Prostate gland (tissue), 2 donors: ENCODE measurements at regions of chr1 and their contacts with region 1.

Region 1: DNA sequence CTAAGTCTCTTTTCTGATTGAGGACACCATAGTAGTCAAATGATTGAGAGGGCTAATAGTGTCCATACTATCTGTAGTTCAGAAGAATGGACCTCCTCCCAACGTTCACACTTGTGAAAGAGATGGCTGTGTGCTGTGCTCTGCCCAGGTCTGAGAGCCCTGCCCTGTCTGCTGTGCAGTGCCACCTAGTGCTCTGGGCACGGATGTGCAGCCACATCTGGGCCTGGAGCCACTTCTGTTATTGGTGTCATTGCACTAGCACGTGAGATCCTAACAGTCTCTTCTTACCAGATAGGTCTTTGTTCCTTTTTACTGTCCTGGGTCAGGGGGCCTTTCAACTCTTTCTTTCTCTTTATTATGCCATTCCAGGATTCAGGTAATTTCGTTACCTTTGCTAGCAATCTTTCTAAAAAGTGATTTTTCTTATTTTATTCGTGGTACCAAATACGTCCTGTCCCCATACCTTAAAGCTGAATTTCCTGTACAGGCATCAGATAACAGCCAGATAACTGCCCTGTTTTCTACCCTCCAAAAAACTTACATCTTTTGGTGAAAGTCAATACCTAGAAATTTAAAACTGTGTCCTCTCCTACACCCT is 21.7 kb downstream of the INTS3 start:
- DNase-seq: peak; percentile 83
- H3K4me3 ChIP-seq: no peak overlapping the region
- H3K27ac ChIP-seq: peak overlapping the region; percentile 5 to 36
- H3K4me1 ChIP-seq: peaks cover 13% of the 10 kb centered on the region
- H3K27me3 ChIP-seq: no peaks in the 10 kb centered on the region
- CTCF ChIP-seq: peak; percentile 50 to 93 (median 84)
- POLR2A ChIP-seq: no peak

Region 2: DNA sequence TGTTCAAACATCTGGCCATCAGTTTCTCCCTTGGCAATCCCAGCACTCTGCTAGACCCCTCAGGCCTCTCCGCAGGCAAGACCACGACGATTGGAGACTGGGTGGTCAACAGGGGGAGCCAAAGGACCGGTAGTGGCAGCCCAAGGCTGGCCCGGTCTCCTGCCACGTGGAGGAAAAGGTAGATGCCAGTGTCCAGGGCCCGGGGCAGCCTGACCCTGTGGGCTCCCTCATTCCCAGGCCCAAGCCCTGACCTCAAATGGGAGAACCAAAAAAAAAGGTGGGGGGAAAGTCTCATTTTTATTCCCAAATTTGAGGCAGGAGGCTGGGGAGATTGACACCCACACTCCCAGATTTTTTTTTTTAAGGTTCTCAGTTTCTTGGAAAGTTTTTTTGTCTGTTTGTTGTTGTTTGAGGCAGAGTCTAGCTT is 238.5 kb before region 1 on chr1:
- intact Hi-C with region 1: loop called (anchors 10 kb)
- DNase-seq: peak; percentile 72
- H3K4me3 ChIP-seq: no peak overlapping the region
- H3K27ac ChIP-seq: no peak overlapping the region
- H3K4me1 ChIP-seq: no peaks in the 10 kb centered on the region
- H3K27me3 ChIP-seq: no peaks in the 10 kb centered on the region
- CTCF ChIP-seq: peak; percentile 62 to 94 (median 80)
- POLR2A ChIP-seq: no peak

Region 3: GRCh38 chr1:153677718-153678505 is 71.6 kb before region 1 on chr1:
- intact Hi-C with region 1: loop called (anchors 2 kb)
- DNase-seq: peak; percentile 38
- H3K4me3 ChIP-seq: peak overlapping the region; percentile 24 to 33
- H3K27ac ChIP-seq: no peak overlapping the region
- H3K4me1 ChIP-seq: no peaks in the 10 kb centered on the region
- H3K27me3 ChIP-seq: no peaks in the 10 kb centered on the region
- CTCF ChIP-seq: peak; percentile 48 to 75 (median 65)
- POLR2A ChIP-seq: no peak

Region 4: GRCh38 chr1:153698020-153698931 is 51.2 kb before region 1 on chr1:
- intact Hi-C with region 1: no loop called
- DNase-seq: no peak
- H3K4me3 ChIP-seq: no peak overlapping the region
- H3K27ac ChIP-seq: no peak overlapping the region
- H3K4me1 ChIP-seq: no peaks in the 10 kb centered on the region
- H3K27me3 ChIP-seq: no peaks in the 10 kb centered on the region
- CTCF ChIP-seq: no peak
- POLR2A ChIP-seq: no peak

Region 5: DNA sequence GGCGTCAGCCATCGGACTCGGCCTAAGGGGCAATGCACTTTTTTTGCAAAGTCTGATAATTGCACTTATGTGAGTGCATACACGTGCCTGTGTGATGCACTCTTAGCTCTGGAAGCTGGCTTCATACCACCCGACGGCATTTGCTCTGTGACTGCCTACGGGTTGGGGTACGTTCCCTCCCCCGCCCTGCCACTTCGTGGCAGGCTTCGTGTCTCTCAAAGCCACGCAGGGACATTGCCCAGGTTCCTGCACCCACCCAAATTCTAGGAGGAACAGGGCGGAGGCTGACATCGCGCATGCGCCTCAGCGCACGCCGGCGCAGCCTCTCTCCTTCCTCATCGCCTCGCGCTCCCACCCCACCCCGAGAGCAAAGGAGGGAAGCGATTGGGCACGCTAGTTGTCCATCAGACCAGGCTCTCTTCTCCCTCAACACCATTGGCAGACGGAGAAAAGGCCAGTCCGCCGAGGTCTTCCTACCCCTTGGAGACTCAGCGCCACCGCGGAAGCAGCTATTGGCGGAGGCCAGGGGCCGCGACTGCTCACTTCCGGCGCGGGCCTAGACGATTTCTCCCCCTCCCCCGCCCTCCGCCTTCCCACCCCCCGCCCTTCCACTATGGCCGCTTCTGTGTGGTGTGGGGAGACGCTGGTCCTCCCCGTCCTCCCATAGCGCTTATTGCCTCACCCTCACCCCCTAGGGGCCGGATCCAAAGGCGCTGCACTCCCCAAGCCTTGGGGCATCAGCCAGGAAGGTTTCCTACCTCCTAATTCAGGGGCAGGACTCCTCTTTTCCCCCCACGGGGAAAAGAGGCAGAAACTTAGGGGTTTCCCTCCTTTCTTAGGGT is 21.8 kb before region 1 on chr1 and contains the start of gene INTS3:
- intact Hi-C with region 1: loop called (anchors 1 kb)
- DNase-seq: peak; percentile 100
- H3K4me3 ChIP-seq: peak within 1 kb of the TSS; percentile 60 to 91
- H3K27ac ChIP-seq: peak within 1 kb of the TSS; percentile 91 to 97
- H3K4me1 ChIP-seq: peaks cover 9% of the 10 kb centered on the region
- H3K27me3 ChIP-seq: no peaks in the 10 kb centered on the region
- CTCF ChIP-seq: no peak
- POLR2A ChIP-seq: peak; percentile 43
- total RNA-seq, gene INTS3: 26.1 to 70.0 TPM

Region 6: DNA sequence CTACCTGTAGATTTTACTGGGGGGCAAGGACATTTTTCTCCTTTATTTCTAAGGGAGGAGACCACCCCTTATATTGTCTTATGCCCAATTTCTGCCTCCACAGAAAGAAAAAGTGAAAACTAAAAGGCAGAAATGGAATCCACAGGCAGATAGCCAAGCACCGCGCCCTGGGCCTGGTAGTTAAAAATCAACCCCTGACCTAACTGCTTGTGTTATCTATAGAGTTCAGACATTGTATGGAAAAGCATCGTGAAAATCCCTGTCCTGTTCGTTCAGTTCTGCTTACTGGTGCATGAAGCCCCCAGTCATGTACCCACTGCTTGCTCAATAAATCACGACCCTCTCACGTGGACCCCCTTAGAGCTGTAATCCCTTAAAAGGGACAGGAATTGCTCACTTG is 621.9 kb after region 1 on chr1:
- intact Hi-C with region 1: no loop called
- DNase-seq: no peak
- H3K4me3 ChIP-seq: no peak overlapping the region
- H3K27ac ChIP-seq: no peak overlapping the region
- H3K4me1 ChIP-seq: no peaks in the 10 kb centered on the region
- H3K27me3 ChIP-seq: no peaks in the 10 kb centered on the region
- CTCF ChIP-seq: no peak
- POLR2A ChIP-seq: no peak